PC-9 (cell line): ENCODE measurements at regions of chr2 and their contacts with region 1.

Region 1: GRCh38 chr2:31586230-31586629 is 5.5 kb upstream of the SRD5A2 start:
- DNase-seq: no peak
- H3K4me3 ChIP-seq: no peak overlapping the region
- H3K27ac ChIP-seq: no peak overlapping the region
- H3K4me1 ChIP-seq: no peaks in the 10 kb centered on the region
- H3K27me3 ChIP-seq: no peaks in the 10 kb centered on the region
- CTCF ChIP-seq: no peak

Region 2: DNA sequence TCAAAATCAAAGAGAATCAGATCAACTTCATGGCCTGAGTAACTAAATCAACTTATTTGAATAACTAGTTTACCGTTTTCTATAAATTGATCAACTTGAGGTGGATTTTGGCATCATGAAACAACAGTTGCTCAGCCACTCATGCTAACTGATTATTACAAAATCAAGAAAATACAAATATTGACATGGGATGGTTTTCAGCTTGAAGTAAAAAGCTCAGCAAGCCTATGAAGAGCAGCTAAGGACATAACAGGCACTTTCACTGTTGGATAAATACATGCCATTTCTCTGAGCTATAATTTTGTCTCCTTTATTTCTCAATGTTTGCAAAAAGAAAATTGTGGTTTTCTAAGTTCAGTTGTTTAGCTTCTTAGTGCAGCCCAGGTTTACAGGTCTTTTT is 24.4 kb before region 1 on chr2:
- CTCF ChIA-PET with region 1: no interaction called
- POLR2A ChIA-PET with region 1: no interaction called
- intact Hi-C with region 1: loop called (anchors 1 kb)
- DNase-seq: no peak
- H3K4me3 ChIP-seq: no peak overlapping the region
- H3K27ac ChIP-seq: no peak overlapping the region
- H3K4me1 ChIP-seq: peaks cover 45% of the 10 kb centered on the region
- H3K27me3 ChIP-seq: no peaks in the 10 kb centered on the region
- CTCF ChIP-seq: no peak

Region 3: GRCh38 chr2:31637161-31637560 is 50.9 kb after region 1 on chr2:
- CTCF ChIA-PET with region 1: no interaction called
- POLR2A ChIA-PET with region 1: no interaction called
- intact Hi-C with region 1: no loop called
- DNase-seq: peak in 1 of 2 experiments; percentile 39
- H3K4me3 ChIP-seq: no peak overlapping the region
- H3K27ac ChIP-seq: no peak overlapping the region
- H3K4me1 ChIP-seq: peaks cover 7% of the 10 kb centered on the region; the same call in 1 of the 2 replicates
- H3K27me3 ChIP-seq: no peaks in the 10 kb centered on the region
- CTCF ChIP-seq: no peak